ENCODE measurements at regions of chr9 and their contacts with region 1.

Region 1: DNA sequence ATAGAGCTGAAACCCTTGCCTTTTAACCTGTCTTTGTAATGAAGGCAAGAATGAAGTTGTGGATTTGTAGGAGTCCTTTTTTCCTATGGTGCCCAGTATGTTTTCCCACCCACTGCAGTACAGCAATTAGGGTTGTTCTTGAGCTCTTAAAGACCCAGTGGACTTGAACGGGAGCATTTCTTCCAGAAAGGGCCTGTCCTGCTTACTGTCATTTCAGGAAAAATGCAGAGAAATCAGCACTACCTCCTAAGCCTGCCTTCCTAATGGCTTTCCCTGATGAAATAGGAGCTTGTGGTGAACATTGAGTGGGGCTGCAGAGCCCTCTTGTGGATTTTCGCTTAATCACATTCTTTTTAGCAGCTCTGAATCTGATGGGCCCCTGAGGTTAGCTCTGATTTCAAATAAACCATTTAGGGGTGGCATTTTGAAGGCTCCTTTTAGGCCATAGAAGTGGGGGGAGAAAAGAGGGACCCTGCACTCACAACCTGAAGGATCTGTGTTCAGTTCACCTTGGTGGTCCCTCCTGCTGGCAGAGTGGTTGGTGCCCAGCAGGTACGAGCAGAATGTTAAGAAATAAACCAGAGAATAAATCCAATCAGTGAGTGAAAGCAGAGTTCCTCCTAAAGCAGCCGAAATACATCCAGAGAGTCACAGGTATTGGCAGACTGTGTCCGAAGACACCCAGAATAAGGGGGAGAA is 188.0 kb upstream of the KLF9 start:
- DNase-seq: peak; percentile 55
- H3K4me3 Mint-ChIP-seq: no peak overlapping the region
- H3K27ac Mint-ChIP-seq: no peak overlapping the region
- H3K4me1 Mint-ChIP-seq: no peaks in the 10 kb centered on the region
- H3K27me3 Mint-ChIP-seq: no peaks in the 10 kb centered on the region

Region 2: DNA sequence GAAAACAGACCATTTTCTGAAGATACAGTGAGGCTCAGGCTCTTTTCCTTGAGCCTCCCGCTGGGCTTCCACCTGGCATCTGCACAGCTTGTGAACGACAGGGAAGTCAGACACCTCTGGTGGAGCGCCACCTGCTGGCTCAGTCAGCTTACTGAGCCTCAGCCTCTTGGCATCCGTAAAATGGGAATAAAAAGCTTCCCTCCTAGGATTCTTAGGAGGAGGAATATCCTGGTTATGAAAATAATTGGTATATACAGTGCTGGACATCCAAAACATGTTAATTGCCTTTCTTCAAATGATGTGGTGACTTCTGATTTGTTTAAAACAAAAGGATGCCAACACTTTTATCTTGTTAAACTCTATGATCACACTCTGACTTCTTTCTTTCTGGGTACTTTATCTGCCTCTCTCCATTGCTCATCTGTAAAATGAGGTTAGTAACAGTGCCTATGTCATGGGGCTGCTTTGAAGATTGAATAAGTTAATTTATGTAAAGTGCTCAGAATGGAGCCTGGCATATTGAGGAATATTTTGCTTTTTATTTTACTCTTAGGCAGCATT is 491.3 kb before region 1 on chr9:
- CTCF ChIA-PET with region 1: interaction called, 10 read pairs
- POLR2A ChIA-PET with region 1: no interaction called
- intact Hi-C with region 1: loop called (anchors 10 kb)
- DNase-seq: peak; percentile 67
- H3K4me3 Mint-ChIP-seq: no peak overlapping the region
- H3K27ac Mint-ChIP-seq: no peak overlapping the region
- H3K4me1 Mint-ChIP-seq: peaks cover 11% of the 10 kb centered on the region
- H3K27me3 Mint-ChIP-seq: peaks cover 5% of the 10 kb centered on the region

Region 3: DNA sequence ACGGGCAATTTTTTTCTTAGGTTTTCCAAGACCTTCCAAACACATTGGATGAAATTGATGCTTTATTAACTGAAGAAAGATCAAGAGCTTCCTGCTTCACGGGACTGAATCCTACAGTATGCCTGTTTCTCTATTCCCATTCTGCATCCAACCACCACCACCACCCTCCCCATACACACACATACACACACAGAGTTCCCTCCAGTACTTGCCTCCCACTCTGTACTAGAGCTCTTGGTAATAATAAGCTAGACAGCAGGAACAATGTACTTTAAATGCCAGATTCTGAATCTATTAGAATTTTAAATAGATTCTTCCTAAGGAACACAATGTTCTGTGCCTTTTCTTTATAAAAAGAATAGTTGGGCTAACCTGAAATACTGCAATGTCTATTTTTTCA is 255.4 kb before region 1 on chr9:
- CTCF ChIA-PET with region 1: interaction called, 13 read pairs
- POLR2A ChIA-PET with region 1: no interaction called
- intact Hi-C with region 1: loop called (anchors 1 kb)
- DNase-seq: no peak
- H3K4me3 Mint-ChIP-seq: no peak overlapping the region
- H3K27ac Mint-ChIP-seq: no peak overlapping the region
- H3K4me1 Mint-ChIP-seq: no peaks in the 10 kb centered on the region
- H3K27me3 Mint-ChIP-seq: no peaks in the 10 kb centered on the region

Region 4: DNA sequence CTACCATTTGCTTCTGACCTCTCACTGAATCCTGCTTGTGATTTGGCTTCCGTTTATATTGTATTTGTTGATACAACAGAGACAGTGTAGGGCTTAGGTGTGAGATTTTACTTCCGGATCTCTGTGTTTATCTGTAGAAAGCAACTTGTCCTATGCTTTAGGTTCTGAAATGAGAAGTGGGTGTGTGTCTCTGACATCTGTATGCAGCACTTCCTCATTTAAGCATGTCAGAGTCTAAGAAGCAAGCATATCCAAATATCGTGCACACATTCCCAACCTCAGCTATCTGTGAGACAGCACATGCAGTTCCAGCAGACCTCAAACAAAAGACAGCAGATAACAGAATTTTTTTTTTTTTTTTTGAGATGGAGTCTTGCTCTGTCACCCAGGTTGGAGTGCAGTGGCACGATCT is 204.3 kb before region 1 on chr9:
- CTCF ChIA-PET with region 1: interaction called, 3 read pairs
- POLR2A ChIA-PET with region 1: no interaction called
- intact Hi-C with region 1: loop called (anchors 5 kb)
- DNase-seq: no peak
- H3K4me3 Mint-ChIP-seq: peak overlapping the region; percentile 48
- H3K27ac Mint-ChIP-seq: peak overlapping the region; percentile 79
- H3K4me1 Mint-ChIP-seq: peaks cover 72% of the 10 kb centered on the region
- H3K27me3 Mint-ChIP-seq: no peaks in the 10 kb centered on the region

Region 5: DNA sequence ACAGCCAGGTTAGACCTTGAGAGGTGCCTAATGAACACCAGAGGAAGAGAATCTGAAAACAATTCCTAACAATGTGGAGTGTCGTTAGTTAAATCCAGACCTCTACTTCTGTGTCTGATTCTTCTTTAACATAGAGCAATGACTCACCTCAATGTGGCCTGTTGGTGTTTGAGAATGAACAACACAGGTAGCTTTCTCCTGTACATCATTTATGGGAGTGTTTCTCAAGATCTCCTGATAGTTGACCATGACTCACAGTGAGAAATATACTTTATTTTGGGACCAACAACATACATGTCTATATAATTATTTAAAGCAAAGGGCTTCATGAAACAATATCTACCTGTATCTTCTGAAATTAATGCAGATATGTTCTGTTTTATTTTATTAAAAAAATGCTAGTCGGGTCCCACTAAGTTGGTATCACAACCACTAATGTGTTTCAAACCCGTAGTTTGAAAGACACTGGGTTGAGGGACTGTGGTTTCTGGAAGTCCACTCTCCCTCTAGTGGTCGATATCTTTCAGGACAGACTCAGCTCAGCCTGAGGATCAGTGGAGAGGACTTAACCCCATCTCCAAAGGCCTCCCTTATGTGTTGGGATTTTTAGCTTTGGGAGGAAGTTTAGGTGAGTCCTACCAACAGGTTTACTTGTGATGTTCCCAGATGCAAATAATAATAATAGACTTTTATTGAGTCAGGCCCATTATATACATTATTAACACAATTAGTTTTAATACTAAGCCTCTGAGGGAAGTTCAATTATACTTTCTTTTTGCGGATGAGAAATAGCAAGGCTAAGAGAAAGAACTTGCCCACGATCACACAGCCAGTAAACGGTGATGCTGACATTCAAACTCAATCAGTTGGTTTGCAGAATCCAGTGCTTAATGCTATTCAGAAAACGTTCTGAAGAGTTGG is 118.0 kb before region 1 on chr9:
- CTCF ChIA-PET with region 1: interaction called, 13 read pairs
- POLR2A ChIA-PET with region 1: no interaction called
- intact Hi-C with region 1: no loop called
- DNase-seq: peak; percentile 21
- H3K4me3 Mint-ChIP-seq: no peak overlapping the region
- H3K27ac Mint-ChIP-seq: no peak overlapping the region
- H3K4me1 Mint-ChIP-seq: peaks cover 7% of the 10 kb centered on the region
- H3K27me3 Mint-ChIP-seq: no peaks in the 10 kb centered on the region

Region 6: DNA sequence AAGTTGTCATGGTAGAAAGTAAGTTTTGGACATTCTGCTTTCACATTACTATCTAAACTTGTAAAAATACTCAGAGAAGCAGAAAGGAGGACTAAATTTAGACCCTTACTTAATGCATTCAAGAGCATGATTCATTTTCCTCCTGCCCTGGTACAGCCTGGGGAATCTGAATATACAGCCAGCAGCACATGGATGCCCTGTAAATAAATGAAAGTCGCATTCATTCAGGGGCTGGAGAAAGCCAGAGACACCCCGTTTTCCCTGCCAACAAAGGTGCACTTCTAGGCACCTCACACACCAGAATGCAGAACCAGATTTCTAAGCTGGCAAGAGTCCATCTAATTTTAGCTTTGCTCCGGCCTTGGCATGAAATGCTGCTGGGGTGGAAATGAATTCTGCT is 15.3 kb before region 1 on chr9:
- CTCF ChIA-PET with region 1: interaction called, 12 read pairs
- POLR2A ChIA-PET with region 1: no interaction called
- intact Hi-C with region 1: no loop called
- DNase-seq: no peak
- H3K4me3 Mint-ChIP-seq: no peak overlapping the region
- H3K27ac Mint-ChIP-seq: no peak overlapping the region
- H3K4me1 Mint-ChIP-seq: no peaks in the 10 kb centered on the region
- H3K27me3 Mint-ChIP-seq: no peaks in the 10 kb centered on the region

Region 7: DNA sequence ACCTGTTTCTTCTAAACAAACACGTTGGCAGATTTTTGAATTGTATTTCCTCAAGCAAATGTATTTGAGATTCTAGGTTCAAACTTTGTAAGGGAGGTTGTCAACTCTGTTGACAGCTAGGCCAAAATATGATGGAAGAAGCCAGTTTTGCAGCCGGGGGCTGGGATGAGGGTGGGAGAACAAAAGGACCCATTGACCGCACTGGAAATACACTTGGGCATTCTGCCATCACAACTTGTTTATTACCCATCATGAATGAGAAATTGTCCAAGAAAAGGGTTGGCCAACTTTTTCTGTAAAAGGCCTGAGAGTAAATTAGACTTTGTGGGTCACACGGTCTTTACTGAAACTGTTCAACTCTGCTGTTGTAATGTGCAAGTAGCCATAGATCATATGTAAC is 33.3 kb after region 1 on chr9:
- CTCF ChIA-PET with region 1: no interaction called
- POLR2A ChIA-PET with region 1: no interaction called
- intact Hi-C with region 1: no loop called
- DNase-seq: no peak
- H3K4me3 Mint-ChIP-seq: no peak overlapping the region
- H3K27ac Mint-ChIP-seq: no peak overlapping the region
- H3K4me1 Mint-ChIP-seq: no peaks in the 10 kb centered on the region
- H3K27me3 Mint-ChIP-seq: peaks cover 3% of the 10 kb centered on the region